WTC11 (cell line): ENCODE measurements at regions of chr15 and their contacts with region 1.

Region 1: GRCh38 chr15:90412356-90413194 is 24.5 kb downstream of the IQGAP1 start:
- DNase-seq: no peak
- ATAC-seq: peak; percentile 83
- H3K4me3 Mint-ChIP-seq: peak overlapping the region; percentile 55
- H3K27ac Mint-ChIP-seq: peak overlapping the region; percentile 100
- H3K4me1 Mint-ChIP-seq: peaks cover 53% of the 10 kb centered on the region
- H3K27me3 Mint-ChIP-seq: no peaks in the 10 kb centered on the region
- CTCF ChIP-seq: no peak

Region 2: GRCh38 chr15:90387537-90388461 is 24.8 kb before region 1 on chr15 and contains the start of gene IQGAP1:
- CTCF ChIA-PET with region 1: interaction called, 9 read pairs
- POLR2A ChIA-PET with region 1: interaction called, 11 read pairs
- DNase-seq: peak; percentile 99
- ATAC-seq: peak; percentile 94
- H3K4me3 Mint-ChIP-seq: peak within 1 kb of the TSS; percentile 83
- H3K27ac Mint-ChIP-seq: peak within 1 kb of the TSS; percentile 89
- H3K4me1 Mint-ChIP-seq: peaks cover 39% of the 10 kb centered on the region
- H3K27me3 Mint-ChIP-seq: no peaks in the 10 kb centered on the region
- CTCF ChIP-seq: no peak
- total RNA-seq, gene IQGAP1: 83.0 to 106 TPM (median 86.8 TPM) in 3 replicates